GM23248 (cell line): ENCODE measurements at regions of chr7 and their contacts with region 1.

Region 1: DNA sequence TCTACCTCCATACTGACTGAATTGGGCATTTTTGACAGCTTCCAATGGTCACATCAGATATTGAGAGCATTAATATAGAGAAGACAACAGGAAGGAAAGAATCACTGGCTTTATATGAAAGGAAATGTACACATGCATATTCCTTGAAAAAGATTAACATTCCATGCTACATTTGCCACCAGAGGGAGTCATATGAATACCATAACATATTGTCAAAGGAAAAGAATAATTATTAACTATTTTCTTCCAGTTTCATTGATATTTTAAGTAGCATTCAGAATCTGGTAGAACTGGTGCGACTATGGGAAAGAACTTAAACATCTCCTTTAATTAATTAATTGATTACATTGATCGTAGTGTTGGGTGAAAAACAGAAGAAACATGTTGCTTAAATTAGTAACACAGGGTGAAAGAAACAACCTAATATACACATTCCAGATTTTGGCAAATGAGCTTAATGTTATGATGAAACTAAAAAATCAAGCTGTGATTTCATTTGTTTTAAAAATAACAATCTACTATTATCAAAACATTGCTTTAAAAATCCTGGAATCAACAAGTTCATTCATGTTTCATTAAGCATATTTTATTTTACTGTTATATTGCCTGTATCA is 71.5 kb downstream of the GPR85 start:
- DNase-seq: peak; percentile 66
- H3K4me3 ChIP-seq: no peak overlapping the region
- H3K27ac ChIP-seq: no peak overlapping the region
- H3K4me1 ChIP-seq: no peaks in the 10 kb centered on the region
- H3K27me3 ChIP-seq: no peaks in the 10 kb centered on the region

Region 2: GRCh38 chr7:113414401-113415035 is 399.4 kb after region 1 on chr7:
- in situ Hi-C with region 1: loop called (anchors 10 kb)
- DNase-seq: no peak
- H3K4me3 ChIP-seq: no peak overlapping the region
- H3K27ac ChIP-seq: no peak overlapping the region
- H3K4me1 ChIP-seq: no peaks in the 10 kb centered on the region
- H3K27me3 ChIP-seq: no peaks in the 10 kb centered on the region; the same call in 1 of the 2 replicates

Region 3: DNA sequence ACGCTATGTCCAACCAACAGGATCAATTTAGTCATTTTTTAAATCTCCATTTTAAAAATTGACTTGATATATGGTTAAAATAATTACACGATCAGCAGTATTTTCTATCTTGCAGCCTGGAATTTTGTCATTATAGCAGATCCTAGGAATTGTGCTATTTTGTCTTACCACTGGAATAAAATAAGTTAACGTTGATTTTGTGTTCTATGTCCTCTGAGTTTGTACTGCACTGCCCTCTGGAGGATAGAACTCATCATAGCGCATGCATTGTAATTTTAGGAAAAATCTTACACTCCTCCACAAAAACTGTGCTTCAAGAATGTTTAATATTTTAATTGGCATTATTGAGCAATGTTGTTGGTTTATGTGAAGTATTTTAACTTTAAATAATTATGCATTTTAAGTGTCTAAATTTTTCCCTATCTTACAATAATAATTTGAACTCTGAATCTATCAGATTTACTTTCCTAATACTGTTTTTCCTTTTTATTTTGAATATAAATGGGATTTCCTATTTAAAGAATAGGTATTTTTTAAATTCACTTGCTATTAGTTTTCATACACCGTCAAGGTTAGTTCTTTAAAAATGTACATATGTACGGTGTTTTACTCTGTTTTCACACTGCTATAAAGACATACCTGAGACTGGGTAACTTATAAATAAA is 683.5 kb after region 1 on chr7:
- in situ Hi-C with region 1: loop called (anchors 25 kb)
- DNase-seq: peak; percentile 59
- H3K4me3 ChIP-seq: peak overlapping the region; percentile 8; the same call in 1 of the 2 replicates
- H3K27ac ChIP-seq: no peak overlapping the region
- H3K4me1 ChIP-seq: no peaks in the 10 kb centered on the region
- H3K27me3 ChIP-seq: 0 out of 2 replicates have a peak, but pooled peaks cover 5% of the 10 kb centered on the region